ENCODE measurements at regions of chr21 and their contacts with region 1.

Region 1: GRCh38 chr21:33380483-33380998 is 22.7 kb upstream of the IFNGR2 start:
- DNase-seq: peak; percentile 96
- ATAC-seq: peak; percentile 85
- H3K4me3 Mint-ChIP-seq: peak overlapping the region; percentile 19
- H3K27ac Mint-ChIP-seq: peak overlapping the region; percentile 88
- H3K4me1 Mint-ChIP-seq: peaks cover 62% of the 10 kb centered on the region
- H3K27me3 Mint-ChIP-seq: peaks cover 4% of the 10 kb centered on the region

Region 2: GRCh38 chr21:32612075-32612998 is 768.2 kb before region 1 on chr21 and contains the start of gene CFAP298:
- CTCF ChIA-PET with region 1: no interaction called
- POLR2A ChIA-PET with region 1: no interaction called
- intact Hi-C with region 1: no loop called
- DNase-seq: peak; percentile 92
- ATAC-seq: peak; percentile 90
- H3K4me3 Mint-ChIP-seq: peak within 1 kb of the TSS; percentile 96
- H3K27ac Mint-ChIP-seq: peak within 1 kb of the TSS; percentile 90
- H3K4me1 Mint-ChIP-seq: peaks cover 9% of the 10 kb centered on the region
- H3K27me3 Mint-ChIP-seq: no peaks in the 10 kb centered on the region
- total RNA-seq, gene CFAP298: 39.5 to 47.9 TPM

Region 3: DNA sequence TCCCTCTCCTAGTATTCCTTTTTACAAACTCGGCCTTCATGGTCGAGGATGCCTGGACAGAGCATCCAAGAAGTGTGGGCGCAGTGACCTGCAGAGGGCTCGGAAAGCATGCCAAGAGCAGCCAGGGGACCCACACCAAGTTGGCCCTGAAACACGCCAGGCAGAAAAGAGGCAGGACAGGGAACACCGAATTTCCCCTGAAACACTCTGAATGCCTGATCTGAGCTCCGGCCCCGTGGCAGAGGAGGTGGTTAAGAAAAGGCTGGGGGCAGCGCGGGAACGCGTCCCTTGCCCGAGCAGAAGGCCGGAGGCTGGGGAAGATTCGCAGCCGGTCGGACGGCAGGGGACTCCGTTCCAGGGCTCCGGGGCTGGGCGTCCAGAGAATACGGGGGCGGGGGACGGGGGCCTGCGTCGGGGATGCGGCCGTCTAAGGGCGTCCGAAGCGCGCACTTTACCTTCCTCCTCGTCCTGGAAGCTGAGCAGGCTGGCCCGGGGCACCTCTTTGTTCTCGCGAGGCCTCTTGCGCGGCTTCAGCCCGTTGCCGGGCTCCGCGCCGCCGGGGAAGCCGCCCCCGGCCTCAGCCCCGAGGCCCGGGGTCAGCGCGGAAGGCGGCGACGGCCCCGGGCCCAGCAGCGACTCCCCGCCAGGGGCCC is 609.5 kb before region 1 on chr21:
- CTCF ChIA-PET with region 1: no interaction called
- POLR2A ChIA-PET with region 1: no interaction called
- intact Hi-C with region 1: loop called in 1 of 2 experiments (anchors 5 kb)
- DNase-seq: peak; percentile 76
- ATAC-seq: peak; percentile 17
- H3K4me3 Mint-ChIP-seq: peak overlapping the region; percentile 99
- H3K27ac Mint-ChIP-seq: peak overlapping the region; percentile 96
- H3K4me1 Mint-ChIP-seq: peaks cover 54% of the 10 kb centered on the region
- H3K27me3 Mint-ChIP-seq: no peaks in the 10 kb centered on the region

Region 4: DNA sequence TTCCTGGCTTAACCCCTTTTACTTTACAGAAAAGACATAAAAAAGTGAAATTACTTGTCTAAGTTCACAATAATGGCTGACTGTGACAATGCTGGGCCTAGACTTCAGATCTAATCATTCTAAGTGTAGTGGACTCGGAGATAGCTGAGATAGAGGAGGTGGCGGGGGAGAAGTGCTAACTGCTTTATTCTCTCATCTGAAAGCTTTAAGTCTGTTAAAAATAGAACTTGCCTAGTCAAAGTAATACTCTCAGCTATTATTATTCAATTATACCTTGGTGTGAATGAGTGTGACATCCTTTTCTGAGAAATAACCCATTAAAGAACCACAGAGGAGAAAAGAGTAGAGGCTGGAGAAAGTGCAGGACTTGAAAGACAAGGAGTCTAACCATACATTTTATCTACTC is 450.9 kb before region 1 on chr21:
- CTCF ChIA-PET with region 1: no interaction called
- POLR2A ChIA-PET with region 1: no interaction called
- intact Hi-C with region 1: loop called in 1 of 2 experiments (anchors 5 kb)
- DNase-seq: peak; percentile 12
- ATAC-seq: peak; percentile 21
- H3K4me3 Mint-ChIP-seq: peak overlapping the region; percentile 6
- H3K27ac Mint-ChIP-seq: peak overlapping the region; percentile 48
- H3K4me1 Mint-ChIP-seq: peaks cover 35% of the 10 kb centered on the region
- H3K27me3 Mint-ChIP-seq: peaks cover 2% of the 10 kb centered on the region

Region 5: GRCh38 chr21:33135925-33136324 is 244.6 kb before region 1 on chr21:
- CTCF ChIA-PET with region 1: no interaction called
- POLR2A ChIA-PET with region 1: no interaction called
- intact Hi-C with region 1: no loop called
- DNase-seq: no peak
- ATAC-seq: no peak
- H3K4me3 Mint-ChIP-seq: no peak overlapping the region
- H3K27ac Mint-ChIP-seq: no peak overlapping the region
- H3K4me1 Mint-ChIP-seq: no peaks in the 10 kb centered on the region
- H3K27me3 Mint-ChIP-seq: no peaks in the 10 kb centered on the region

Region 6: GRCh38 chr21:33238565-33239255 is 141.8 kb before region 1 on chr21:
- CTCF ChIA-PET with region 1: no interaction called
- POLR2A ChIA-PET with region 1: no interaction called
- intact Hi-C with region 1: loop called (anchors 1 to 2 kb)
- DNase-seq: peak; percentile 37
- ATAC-seq: peak; percentile 59
- H3K4me3 Mint-ChIP-seq: peak overlapping the region; percentile 44
- H3K27ac Mint-ChIP-seq: peak overlapping the region; percentile 90
- H3K4me1 Mint-ChIP-seq: peaks cover 84% of the 10 kb centered on the region
- H3K27me3 Mint-ChIP-seq: no peaks in the 10 kb centered on the region

Region 7: GRCh38 chr21:33308586-33309490 is 71.7 kb before region 1 on chr21:
- CTCF ChIA-PET with region 1: no interaction called
- POLR2A ChIA-PET with region 1: no interaction called
- intact Hi-C with region 1: no loop called
- DNase-seq: no peak
- ATAC-seq: no peak
- H3K4me3 Mint-ChIP-seq: no peak overlapping the region
- H3K27ac Mint-ChIP-seq: no peak overlapping the region
- H3K4me1 Mint-ChIP-seq: peaks cover 17% of the 10 kb centered on the region
- H3K27me3 Mint-ChIP-seq: no peaks in the 10 kb centered on the region

Region 8: DNA sequence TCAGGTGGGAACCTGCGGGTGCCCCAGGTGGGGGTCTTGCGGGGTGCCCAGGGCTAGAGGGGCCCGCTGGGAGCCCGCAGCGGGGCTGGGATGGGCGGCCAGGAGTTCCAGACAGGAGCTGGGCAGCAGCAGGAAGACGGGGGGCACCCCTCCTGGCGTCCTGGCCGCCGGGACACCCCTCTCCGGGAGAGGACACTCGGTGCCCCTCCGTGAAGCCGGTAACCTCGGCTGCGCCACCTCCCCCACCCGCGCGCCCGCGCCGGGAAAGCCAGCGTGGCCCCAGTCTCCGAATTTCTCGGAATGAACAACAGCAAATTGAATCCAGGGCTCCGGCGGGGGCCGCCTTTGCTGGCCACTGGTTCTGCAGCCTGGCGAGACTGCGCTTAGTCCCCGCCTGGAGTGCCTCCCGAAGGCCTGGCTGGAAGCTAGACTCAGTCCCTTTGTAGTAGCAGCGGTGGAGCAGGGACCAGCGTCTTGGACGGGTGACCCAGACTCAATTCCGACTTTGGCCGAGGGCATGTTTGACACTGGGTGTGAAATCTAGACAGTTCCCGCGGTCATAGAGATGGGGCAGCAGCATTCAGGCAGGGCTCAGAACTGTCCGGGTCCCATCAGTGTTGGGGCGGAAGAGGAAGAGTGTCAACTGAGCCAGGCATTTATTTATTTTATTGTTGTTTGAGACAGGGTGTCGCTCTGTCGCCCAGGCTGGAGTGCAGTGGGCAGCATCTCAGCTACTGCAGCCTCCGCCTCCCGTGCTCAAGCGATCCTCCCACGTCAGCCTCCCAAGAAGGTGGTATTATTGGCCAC is 23.4 kb after region 1 on chr21:
- CTCF ChIA-PET with region 1: interaction called, 12 read pairs
- POLR2A ChIA-PET with region 1: no interaction called
- intact Hi-C with region 1: loop called (anchors 1 kb)
- DNase-seq: peak; percentile 55
- ATAC-seq: peak; percentile 36
- H3K4me3 Mint-ChIP-seq: peak overlapping the region; percentile 86
- H3K27ac Mint-ChIP-seq: peak overlapping the region; percentile 89
- H3K4me1 Mint-ChIP-seq: peaks cover 40% of the 10 kb centered on the region
- H3K27me3 Mint-ChIP-seq: peaks cover 7% of the 10 kb centered on the region

Region 9: DNA sequence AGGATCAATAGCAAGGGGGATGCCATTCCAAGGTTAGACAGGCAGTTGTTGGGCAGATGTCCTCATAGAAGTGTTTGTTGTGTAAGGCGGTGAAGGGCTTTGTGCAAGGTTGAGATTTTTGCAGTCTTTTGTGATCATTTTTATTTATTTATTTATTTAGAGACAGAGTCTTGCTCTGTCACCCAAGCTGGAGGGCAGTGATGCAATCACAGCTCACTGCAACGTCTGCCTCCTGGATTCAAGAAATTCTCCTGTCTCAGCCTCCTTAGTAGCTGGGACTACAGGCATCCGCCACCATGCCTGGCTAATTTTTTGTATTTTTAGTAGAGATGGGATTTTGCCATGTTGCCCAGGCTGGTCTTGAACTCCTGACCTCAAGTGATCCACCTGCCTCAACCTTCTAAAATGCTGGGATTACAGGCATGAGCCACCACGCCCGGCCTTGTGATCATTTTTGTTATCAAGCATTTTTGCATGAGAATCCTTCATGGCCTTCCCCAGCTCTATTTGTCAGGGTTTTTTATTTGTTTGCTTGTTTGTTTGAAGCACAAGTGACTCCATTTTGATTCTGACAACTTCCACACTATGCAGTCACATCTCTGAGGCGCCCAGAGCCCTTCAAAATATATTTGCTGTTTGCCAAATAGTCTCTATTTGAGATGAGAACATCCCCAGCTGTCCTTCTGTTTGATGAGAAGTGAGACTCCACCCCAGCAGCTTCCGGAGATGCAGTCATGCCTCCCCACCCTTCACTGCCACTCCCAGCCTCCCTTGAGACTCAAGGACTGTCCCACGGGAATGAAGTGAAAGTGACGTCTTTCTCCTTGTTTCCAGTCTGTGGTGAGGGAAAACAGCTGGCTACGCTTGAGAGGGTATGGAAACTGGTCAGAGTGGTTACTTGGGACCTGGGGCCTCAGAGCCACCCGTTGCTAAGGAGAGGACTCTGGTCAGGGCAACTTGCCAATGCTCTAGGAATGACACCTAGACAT is 61.2 kb after region 1 on chr21:
- CTCF ChIA-PET with region 1: interaction called, 15 read pairs
- POLR2A ChIA-PET with region 1: interaction called, 3 read pairs
- intact Hi-C with region 1: loop called (anchors 2 kb)
- DNase-seq: no peak
- ATAC-seq: no peak
- H3K4me3 Mint-ChIP-seq: no peak overlapping the region
- H3K27ac Mint-ChIP-seq: peak overlapping the region; percentile 12
- H3K4me1 Mint-ChIP-seq: peaks cover 5% of the 10 kb centered on the region
- H3K27me3 Mint-ChIP-seq: no peaks in the 10 kb centered on the region

Region 10: GRCh38 chr21:33588485-33589335 is 208.2 kb after region 1 on chr21 and contains the start of gene DONSON:
- CTCF ChIA-PET with region 1: no interaction called
- POLR2A ChIA-PET with region 1: no interaction called
- intact Hi-C with region 1: loop called in 1 of 2 experiments (anchors 10 kb)
- DNase-seq: peak; percentile 93
- ATAC-seq: peak; percentile 92
- H3K4me3 Mint-ChIP-seq: peak within 1 kb of the TSS; percentile 91
- H3K27ac Mint-ChIP-seq: peak within 1 kb of the TSS; percentile 87
- H3K4me1 Mint-ChIP-seq: peaks cover 19% of the 10 kb centered on the region
- H3K27me3 Mint-ChIP-seq: no peaks in the 10 kb centered on the region
- total RNA-seq, gene DONSON: 39.5 to 41.8 TPM

Measured in activated CD4-positive, alpha-beta T cell treated with anti-CD3 and anti-CD28 coated beads for 36 hours (primary cell).